Activated CD4-positive, alpha-beta memory T cell treated with anti-CD3 and anti-CD28 coated beads, Interleukin-2, amount 10 ng/mL, durations not matched to agents 7 days and 5 days (primary cell): ENCODE measurements at regions of chr1 and their contacts with region 1.

Region 1: GRCh38 chr1:116737020-116737854 is 17.0 kb upstream of the CD2 start:
- DNase-seq: peak; percentile 85
- H3K4me3 Mint-ChIP-seq: peak overlapping the region; percentile 68
- H3K27ac Mint-ChIP-seq: peak overlapping the region; percentile 99
- H3K4me1 Mint-ChIP-seq: peaks cover 57% of the 10 kb centered on the region
- H3K27me3 Mint-ChIP-seq: no peaks in the 10 kb centered on the region

Region 2: DNA sequence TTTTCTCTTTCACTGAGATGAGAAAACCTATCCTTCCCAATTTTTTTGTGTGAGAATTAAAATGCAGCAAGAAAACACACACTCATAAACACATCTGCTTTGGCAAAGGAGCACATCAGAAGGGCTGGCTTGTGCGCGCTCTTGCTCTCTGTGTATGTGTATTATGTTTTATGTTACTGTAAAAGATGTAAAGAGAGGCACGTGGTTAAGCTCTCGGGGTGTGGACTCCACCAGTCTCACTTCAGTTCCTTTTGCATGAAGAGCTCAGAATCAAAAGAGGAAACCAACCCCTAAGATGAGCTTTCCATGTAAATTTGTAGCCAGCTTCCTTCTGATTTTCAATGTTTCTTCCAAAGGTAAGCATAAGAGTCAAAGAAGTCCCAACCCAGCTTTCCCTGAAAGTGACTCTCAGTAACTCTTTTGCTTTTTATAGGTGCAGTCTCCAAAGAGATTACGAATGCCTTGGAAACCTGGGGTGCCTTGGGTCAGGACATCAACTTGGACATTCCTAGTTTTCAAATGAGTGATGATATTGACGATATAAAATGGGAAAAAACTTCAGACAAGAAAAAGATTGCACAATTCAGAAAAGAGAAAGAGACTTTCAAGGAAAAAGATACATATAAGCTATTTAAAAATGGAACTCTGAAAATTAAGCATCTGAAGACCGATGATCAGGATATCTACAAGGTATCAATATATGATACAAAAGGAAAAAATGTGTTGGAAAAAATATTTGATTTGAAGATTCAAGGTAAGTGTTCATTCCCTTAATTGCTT is 17.2 kb after region 1 on chr1 and contains the start of gene CD2:
- CTCF ChIA-PET with region 1: interaction called, 109 read pairs
- POLR2A ChIA-PET with region 1: interaction called, 283 read pairs
- DNase-seq: peak; percentile 73
- H3K4me3 Mint-ChIP-seq: peak within 1 kb of the TSS; percentile 99
- H3K27ac Mint-ChIP-seq: peak within 1 kb of the TSS; percentile 95
- H3K4me1 Mint-ChIP-seq: peaks cover 39% of the 10 kb centered on the region
- H3K27me3 Mint-ChIP-seq: no peaks in the 10 kb centered on the region
- total RNA-seq, gene CD2: 329 to 340 TPM

Region 3: GRCh38 chr1:116806245-116806644 is 69.0 kb after region 1 on chr1:
- CTCF ChIA-PET with region 1: interaction called, 37 read pairs
- POLR2A ChIA-PET with region 1: interaction called, 113 read pairs
- DNase-seq: peak; percentile 65
- H3K4me3 Mint-ChIP-seq: peak overlapping the region; percentile 79
- H3K27ac Mint-ChIP-seq: peak overlapping the region; percentile 95
- H3K4me1 Mint-ChIP-seq: peaks cover 86% of the 10 kb centered on the region
- H3K27me3 Mint-ChIP-seq: no peaks in the 10 kb centered on the region

Region 4: DNA sequence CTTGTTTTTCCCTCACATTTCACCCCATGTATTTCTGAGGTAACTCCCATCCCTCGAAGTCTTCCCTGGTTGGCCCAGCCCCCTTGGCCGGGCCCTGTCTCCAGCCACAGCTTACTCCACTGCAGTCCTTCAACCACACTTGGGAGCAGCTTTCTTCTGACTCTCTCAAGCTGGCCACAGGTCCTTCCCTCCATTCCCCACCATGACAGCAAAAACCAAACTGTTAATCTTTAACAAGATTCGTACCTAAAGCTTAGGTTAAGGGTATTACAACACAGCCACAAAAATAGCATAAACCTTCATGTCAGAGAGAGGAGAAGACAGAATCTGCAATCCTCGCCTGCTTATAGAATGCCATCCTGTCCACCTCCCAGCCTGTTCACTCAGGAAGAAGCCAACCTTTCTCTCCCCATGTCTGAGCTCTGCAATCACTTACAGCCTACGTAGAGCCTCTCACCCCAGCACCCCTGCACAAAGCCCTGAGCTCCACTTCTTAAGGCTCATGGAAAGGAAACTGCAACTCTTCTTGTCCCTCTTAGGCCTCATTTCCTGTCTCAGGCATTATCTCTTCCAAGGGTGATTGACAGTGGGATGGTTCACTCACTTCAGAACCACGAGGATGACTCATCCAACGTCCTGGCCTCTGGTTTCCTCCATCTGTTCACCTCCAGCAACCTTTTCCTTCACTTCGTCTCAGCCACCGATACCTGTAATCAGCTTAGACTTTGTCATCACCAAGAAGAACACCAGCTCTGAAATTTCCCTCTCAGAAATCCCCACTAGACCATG is 89.8 kb after region 1 on chr1:
- CTCF ChIA-PET with region 1: interaction called, 17 read pairs
- POLR2A ChIA-PET with region 1: interaction called, 22 read pairs
- DNase-seq: peak; percentile 77
- H3K4me3 Mint-ChIP-seq: peak overlapping the region; percentile 58
- H3K27ac Mint-ChIP-seq: peak overlapping the region; percentile 96
- H3K4me1 Mint-ChIP-seq: peaks cover 55% of the 10 kb centered on the region
- H3K27me3 Mint-ChIP-seq: no peaks in the 10 kb centered on the region

Region 5: DNA sequence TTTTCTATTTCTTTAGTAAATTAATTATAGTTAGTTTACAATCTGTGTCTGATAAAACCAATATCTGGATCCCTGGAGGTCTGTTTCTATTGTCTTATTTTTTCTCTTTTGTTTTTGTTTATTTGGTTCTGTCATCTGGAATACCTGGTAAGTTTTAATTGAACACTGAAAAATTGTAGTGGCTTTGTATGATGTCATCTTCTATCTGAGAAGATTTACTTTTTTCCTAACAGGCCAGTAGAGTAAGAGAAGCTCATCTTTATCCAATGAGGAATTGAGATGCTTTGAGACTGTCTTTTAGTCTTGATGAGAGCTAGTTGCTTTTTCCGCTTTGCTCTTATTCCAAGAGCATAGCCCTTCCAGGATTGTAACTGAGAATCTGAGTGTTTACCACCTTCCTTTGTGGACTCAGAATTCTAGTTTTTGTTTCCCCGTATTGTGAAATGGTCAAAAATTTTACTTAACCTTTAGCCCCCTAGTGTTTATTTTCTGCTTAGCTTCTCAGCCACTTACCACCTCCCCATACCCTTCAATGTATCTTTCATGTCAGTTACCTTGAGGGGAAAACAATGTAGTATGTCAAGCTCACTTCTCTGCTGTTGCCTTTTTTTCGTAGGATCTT is 197.5 kb after region 1 on chr1:
- CTCF ChIA-PET with region 1: interaction called, 24 read pairs
- POLR2A ChIA-PET with region 1: interaction called, 7 read pairs
- DNase-seq: no peak
- H3K4me3 Mint-ChIP-seq: no peak overlapping the region
- H3K27ac Mint-ChIP-seq: peak overlapping the region; percentile 17
- H3K4me1 Mint-ChIP-seq: peaks cover 24% of the 10 kb centered on the region
- H3K27me3 Mint-ChIP-seq: no peaks in the 10 kb centered on the region

Region 6: GRCh38 chr1:117026361-117026760 is 289.1 kb after region 1 on chr1:
- CTCF ChIA-PET with region 1: no interaction called
- POLR2A ChIA-PET with region 1: no interaction called
- DNase-seq: no peak
- H3K4me3 Mint-ChIP-seq: no peak overlapping the region
- H3K27ac Mint-ChIP-seq: no peak overlapping the region
- H3K4me1 Mint-ChIP-seq: peaks cover 2% of the 10 kb centered on the region
- H3K27me3 Mint-ChIP-seq: peaks cover 2% of the 10 kb centered on the region

Region 7: GRCh38 chr1:117051224-117052064 is 314.2 kb after region 1 on chr1:
- CTCF ChIA-PET with region 1: interaction called, 33 read pairs
- POLR2A ChIA-PET with region 1: interaction called, 93 read pairs
- DNase-seq: peak; percentile 58
- H3K4me3 Mint-ChIP-seq: peak overlapping the region; percentile 71
- H3K27ac Mint-ChIP-seq: peak overlapping the region; percentile 80
- H3K4me1 Mint-ChIP-seq: peaks cover 46% of the 10 kb centered on the region
- H3K27me3 Mint-ChIP-seq: no peaks in the 10 kb centered on the region